ENCODE measurements at regions of chr7 and their contacts with region 1.

Region 1: GRCh38 chr7:37448636-37449361 is at the start of gene ELMO1:
- DNase-seq: peak; percentile 50 to 92 (median 76)
- ATAC-seq: peak; percentile 76
- H3K4me3 ChIP-seq: peak within 1 kb of the TSS; percentile 71 to 91
- H3K4me3 Mint-ChIP-seq: peak within 1 kb of the TSS; percentile 95
- H3K27ac ChIP-seq: peak within 1 kb of the TSS; percentile 86 to 87
- H3K27ac Mint-ChIP-seq: peak within 1 kb of the TSS; percentile 98
- H3K4me1 ChIP-seq: peaks cover 29% of the 10 kb centered on the region
- H3K4me1 Mint-ChIP-seq: peaks cover 48% of the 10 kb centered on the region
- H3K27me3 ChIP-seq: no peaks in the 10 kb centered on the region
- H3K27me3 Mint-ChIP-seq: no peaks in the 10 kb centered on the region
- CTCF ChIP-seq: peak; percentile 68
- total RNA-seq, gene ELMO1: 79.4 to 96.2 TPM

Region 2: DNA sequence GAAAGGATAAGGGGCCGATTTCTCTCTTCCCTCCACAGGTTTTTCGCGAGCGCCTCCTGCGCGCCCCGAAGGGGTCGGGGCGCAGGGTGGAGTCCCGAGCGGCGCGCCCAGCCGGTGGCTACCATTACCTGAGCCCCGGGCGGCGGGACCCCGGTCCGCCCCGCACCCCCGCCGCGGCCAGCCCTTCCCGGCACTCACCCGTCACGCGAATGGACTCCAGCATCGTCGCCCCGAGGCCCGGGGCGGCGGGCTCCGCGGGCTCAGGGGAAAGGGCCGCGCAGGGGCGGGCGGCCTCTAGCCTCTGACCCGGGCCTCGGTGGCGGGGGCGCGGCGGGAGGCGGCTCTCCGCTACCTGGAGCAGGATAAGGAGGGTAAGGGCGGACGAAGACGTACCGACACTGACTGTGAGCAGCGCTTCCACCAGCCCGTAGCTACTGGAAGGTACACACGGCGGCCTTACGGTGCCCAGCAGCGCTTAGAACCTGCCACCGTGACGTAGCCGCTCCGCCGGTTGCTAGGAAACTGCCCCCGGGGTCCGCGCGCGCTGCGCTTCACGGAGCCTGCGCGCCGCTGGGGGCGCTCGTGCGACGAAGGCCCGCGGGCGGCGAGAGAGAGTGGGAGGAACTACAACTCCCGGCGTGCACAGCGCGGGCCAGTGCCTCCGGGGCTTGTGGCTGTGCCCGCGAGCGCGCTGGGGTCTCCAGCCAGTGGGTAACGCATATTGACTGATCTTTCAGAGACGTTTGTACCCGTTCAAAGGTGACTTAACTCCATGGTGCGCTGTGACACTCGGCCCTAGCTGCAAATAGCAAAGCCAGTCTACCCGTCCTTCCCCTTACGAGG is 1081.9 kb before region 1 on chr7:
- CTCF ChIA-PET with region 1: no interaction called
- POLR2A ChIA-PET with region 1: no interaction called
- intact Hi-C with region 1: loop called (anchors 2 to 10 kb)
- DNase-seq: peak; percentile 88 to 96 (median 92)
- ATAC-seq: peak; percentile 96
- H3K4me3 ChIP-seq: peak overlapping the region; percentile 65 to 73
- H3K4me3 Mint-ChIP-seq: peak overlapping the region; percentile 94
- H3K27ac ChIP-seq: peak overlapping the region; percentile 62 to 71
- H3K27ac Mint-ChIP-seq: peak overlapping the region; percentile 85
- H3K4me1 ChIP-seq: peaks cover 4% of the 10 kb centered on the region
- H3K4me1 Mint-ChIP-seq: peaks cover 6% of the 10 kb centered on the region
- H3K27me3 ChIP-seq: peaks cover 0 to 2% of the 10 kb centered on the region in 2 experiments
- H3K27me3 Mint-ChIP-seq: peaks cover 2% of the 10 kb centered on the region
- CTCF ChIP-seq: peak; percentile 91

Region 3: DNA sequence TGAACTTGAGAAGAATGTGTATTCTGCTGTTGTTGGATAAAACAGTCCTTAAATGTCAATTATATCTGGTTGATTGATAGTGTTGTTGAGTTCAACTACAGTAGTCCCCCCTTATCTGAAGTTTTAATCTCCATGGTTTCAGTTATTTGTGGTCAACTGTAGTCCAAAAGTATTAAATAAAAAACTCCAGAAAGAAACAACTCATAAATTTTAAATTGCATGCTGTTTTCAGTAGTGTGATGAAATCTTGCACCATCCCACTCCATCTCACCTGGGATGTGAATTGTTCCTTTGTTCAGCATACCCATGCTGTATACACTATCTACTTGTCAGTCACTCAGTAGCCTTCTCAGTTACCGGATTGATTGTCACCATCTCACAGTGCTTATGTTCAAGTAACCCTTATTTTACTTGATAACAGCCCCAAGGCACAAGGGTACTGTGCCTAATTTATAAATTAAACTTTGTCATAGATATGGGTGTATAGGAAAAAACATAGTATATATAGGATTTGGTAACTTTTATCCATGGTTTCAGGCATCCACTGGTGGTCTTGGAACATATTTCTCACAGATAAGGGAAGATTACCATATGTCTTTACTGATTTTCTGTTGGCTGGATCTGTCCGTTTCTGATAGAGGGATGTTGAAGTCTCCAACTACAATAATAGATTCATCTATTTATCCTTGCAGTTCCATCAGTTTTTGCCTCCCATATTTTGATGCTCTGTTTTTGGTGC is 781.6 kb before region 1 on chr7:
- CTCF ChIA-PET with region 1: no interaction called
- POLR2A ChIA-PET with region 1: no interaction called
- intact Hi-C with region 1: no loop called
- DNase-seq: no peak
- ATAC-seq: no peak
- H3K4me3 ChIP-seq: no peak overlapping the region
- H3K4me3 Mint-ChIP-seq: no peak overlapping the region
- H3K27ac ChIP-seq: no peak overlapping the region
- H3K27ac Mint-ChIP-seq: no peak overlapping the region
- H3K4me1 ChIP-seq: peaks cover 20% of the 10 kb centered on the region
- H3K4me1 Mint-ChIP-seq: peaks cover 43% of the 10 kb centered on the region
- H3K27me3 ChIP-seq: no peaks in the 10 kb centered on the region
- H3K27me3 Mint-ChIP-seq: no peaks in the 10 kb centered on the region
- CTCF ChIP-seq: no peak

Region 4: DNA sequence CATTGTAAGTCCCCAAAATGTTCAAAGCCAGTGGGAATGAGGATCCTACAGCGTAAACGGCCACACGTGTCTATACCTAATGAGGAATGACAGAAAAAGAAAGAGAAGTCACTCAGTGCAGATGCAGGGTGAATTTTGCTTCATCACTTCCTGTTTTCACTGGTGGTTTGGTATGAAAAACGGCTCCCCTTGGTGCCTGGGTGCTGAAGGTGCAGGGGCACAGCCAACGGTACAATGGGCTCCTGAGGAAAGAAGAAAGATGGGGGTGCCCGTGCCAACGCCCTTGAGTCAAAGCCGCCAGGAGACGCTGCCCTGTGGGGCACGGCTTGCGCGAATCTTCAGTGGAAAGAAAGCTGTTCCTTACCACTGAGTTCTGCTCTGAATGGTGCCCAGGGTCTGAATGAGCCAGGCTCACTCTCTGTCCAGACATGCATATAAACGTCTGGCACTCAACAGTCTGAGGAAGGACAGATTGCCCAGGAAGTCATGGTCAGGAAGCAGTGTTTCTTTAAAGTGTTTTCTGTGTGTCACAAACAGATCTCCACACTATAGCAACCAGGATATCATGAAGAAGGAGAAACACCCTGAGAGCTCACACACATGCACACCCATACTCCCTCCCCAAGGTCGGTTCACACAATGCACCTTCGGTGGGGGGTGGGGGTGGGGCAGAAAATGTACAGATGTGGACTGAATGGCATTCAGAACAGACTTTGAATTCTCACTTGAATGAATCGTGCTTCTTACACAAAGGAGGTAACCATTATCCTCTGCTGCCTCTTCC is 105.9 kb before region 1 on chr7:
- CTCF ChIA-PET with region 1: interaction called, 4 read pairs
- POLR2A ChIA-PET with region 1: interaction called, 3 read pairs
- intact Hi-C with region 1: loop called in 1 of 2 experiments (anchors 2 kb)
- DNase-seq: peak; percentile 48 to 87 (median 73)
- ATAC-seq: peak; percentile 91
- H3K4me3 ChIP-seq: peak overlapping the region; percentile 53 to 64
- H3K4me3 Mint-ChIP-seq: peak overlapping the region; percentile 93
- H3K27ac ChIP-seq: peak overlapping the region; percentile 69 to 72
- H3K27ac Mint-ChIP-seq: peak overlapping the region; percentile 97
- H3K4me1 ChIP-seq: peaks cover 39% of the 10 kb centered on the region
- H3K4me1 Mint-ChIP-seq: peaks cover 69% of the 10 kb centered on the region
- H3K27me3 ChIP-seq: no peaks in the 10 kb centered on the region
- H3K27me3 Mint-ChIP-seq: no peaks in the 10 kb centered on the region
- CTCF ChIP-seq: peak; percentile 43

Region 5: GRCh38 chr7:37434529-37434928 is 14.3 kb before region 1 on chr7:
- CTCF ChIA-PET with region 1: interaction called, 3 read pairs
- POLR2A ChIA-PET with region 1: interaction called, 10 read pairs
- intact Hi-C with region 1: loop called in 1 of 2 experiments (anchors 1 kb)
- DNase-seq: no peak
- ATAC-seq: no peak
- H3K4me3 ChIP-seq: no peak overlapping the region
- H3K4me3 Mint-ChIP-seq: no peak overlapping the region
- H3K27ac ChIP-seq: no peak overlapping the region
- H3K27ac Mint-ChIP-seq: no peak overlapping the region
- H3K4me1 ChIP-seq: peaks cover 34% of the 10 kb centered on the region
- H3K4me1 Mint-ChIP-seq: peaks cover 84% of the 10 kb centered on the region
- H3K27me3 ChIP-seq: no peaks in the 10 kb centered on the region
- H3K27me3 Mint-ChIP-seq: no peaks in the 10 kb centered on the region
- CTCF ChIP-seq: no peak